Activated CD8-positive, alpha-beta T cell treated with anti-CD3 and anti-CD28 coated beads for 36 hours (primary cell): ENCODE measurements at regions of chr16 and their contacts with region 1.

Region 1: GRCh38 chr16:88639231-88640038 is 1.1 kb downstream of the IL17C start:
- DNase-seq: peak; percentile 31
- ATAC-seq: no peak
- H3K4me3 Mint-ChIP-seq: no peak overlapping the region
- H3K27ac Mint-ChIP-seq: no peak overlapping the region
- H3K4me1 Mint-ChIP-seq: peaks cover 33% of the 10 kb centered on the region
- H3K27me3 Mint-ChIP-seq: peaks cover 20% of the 10 kb centered on the region
- CTCF ChIP-seq: no peak

Region 2: GRCh38 chr16:88569985-88570690 is 69.3 kb before region 1 on chr16 and contains the start of gene ZC3H18:
- CTCF ChIA-PET with region 1: no interaction called
- POLR2A ChIA-PET with region 1: interaction called, 14 read pairs
- intact Hi-C with region 1: no loop called
- DNase-seq: peak; percentile 96
- ATAC-seq: peak; percentile 91
- H3K4me3 Mint-ChIP-seq: peak within 1 kb of the TSS; percentile 90
- H3K27ac Mint-ChIP-seq: peak within 1 kb of the TSS; percentile 87
- H3K4me1 Mint-ChIP-seq: peaks cover 35% of the 10 kb centered on the region
- H3K27me3 Mint-ChIP-seq: no peaks in the 10 kb centered on the region
- CTCF ChIP-seq: no peak
- total RNA-seq, gene ZC3H18: 67.7 to 73.5 TPM

Region 3: GRCh38 chr16:88650749-88651275 is 11.4 kb after region 1 on chr16 and contains the start of gene CYBA:
- CTCF ChIA-PET with region 1: no interaction called
- POLR2A ChIA-PET with region 1: interaction called, 28 read pairs
- intact Hi-C with region 1: no loop called
- DNase-seq: peak; percentile 92
- ATAC-seq: peak; percentile 86
- H3K4me3 Mint-ChIP-seq: peak within 1 kb of the TSS; percentile 87
- H3K27ac Mint-ChIP-seq: peak within 1 kb of the TSS; percentile 95
- H3K4me1 Mint-ChIP-seq: peaks cover 10% of the 10 kb centered on the region
- H3K27me3 Mint-ChIP-seq: no peaks in the 10 kb centered on the region
- CTCF ChIP-seq: no peak
- total RNA-seq, gene CYBA: 230 to 236 TPM